Heart left ventricle (tissue), 16 donors: ENCODE measurements at regions of chr7 and their contacts with region 1.

Region 1: DNA sequence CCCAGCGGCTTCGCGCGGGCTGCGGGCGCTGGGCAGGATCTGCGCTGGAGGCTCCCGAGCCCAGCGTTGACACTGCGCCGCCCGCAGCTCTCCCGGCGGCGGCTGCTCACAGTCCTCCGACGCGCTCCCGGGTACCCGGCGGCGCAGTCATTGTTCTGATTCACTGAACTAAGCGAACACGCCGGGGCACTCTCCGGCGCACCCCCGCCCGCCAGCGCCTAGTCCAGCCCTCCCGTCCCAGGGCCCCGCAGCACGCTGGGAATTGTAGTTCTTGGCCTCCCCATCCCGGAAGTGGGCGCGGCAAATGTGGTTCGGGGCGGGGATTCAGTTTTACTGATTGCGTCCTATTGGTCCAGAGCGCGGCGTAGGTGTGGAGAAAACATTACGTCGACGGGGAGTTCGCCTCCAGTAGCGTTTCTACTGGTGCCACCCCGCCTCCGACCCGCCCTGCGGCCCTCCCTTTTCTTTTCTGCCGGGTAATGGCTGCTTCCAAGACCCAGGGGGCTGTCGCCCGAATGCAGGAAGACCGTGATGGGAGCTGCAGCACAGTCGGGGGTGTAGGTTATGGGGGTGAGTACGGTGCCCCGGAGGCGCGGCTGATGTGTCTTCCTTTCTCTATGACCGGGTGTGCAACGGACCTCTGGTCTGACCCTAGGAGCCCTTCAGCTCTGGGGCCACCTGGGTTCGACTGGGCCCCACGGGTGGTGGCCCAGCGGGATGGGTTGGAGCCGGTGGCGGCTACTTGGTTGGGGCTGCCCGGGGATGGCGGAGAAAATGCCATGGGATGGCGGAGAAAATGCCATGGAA is at the starts of genes DOCK4 and ZNF277:
- DNase-seq: peak; percentile 99
- ATAC-seq: peak; percentile 96 to 98 (median 96)
- H3K4me3 ChIP-seq: peak within 1 kb of the TSS; percentile 59 to 98 (median 88)
- H3K27ac ChIP-seq: peak within 1 kb of the TSS; percentile 72 to 95 (median 90)
- H3K4me1 ChIP-seq: peaks cover 0 to 43% (median 17%) of the 10 kb centered on the region in 12 donors
- H3K27me3 ChIP-seq: no peaks in the 10 kb centered on the region
- CTCF ChIP-seq: peak in 1 of 12 donors; percentile 16
- POLR2A ChIP-seq: peak; percentile 60 to 98
- total RNA-seq, gene DOCK4: 9.7 to 40.8 (median 17.0) TPM
- total RNA-seq, gene ZNF277: 10.3 to 26.5 (median 16.6) TPM

Region 2: GRCh38 chr7:111752022-111752582 is 454.3 kb before region 1 on chr7:
- intact Hi-C with region 1: loop called in 1 of 10 experiments (anchors 5 kb)
- DNase-seq: peak; percentile 37 to 71 (median 44)
- ATAC-seq: peak in 3 of 4 donors; percentile 50 to 56 (median 56)
- H3K4me3 ChIP-seq: no peak overlapping the region
- H3K27ac ChIP-seq: no peak overlapping the region
- H3K4me1 ChIP-seq: peaks cover 0 to under 1% (median 0%) of the 10 kb centered on the region in 12 donors
- H3K27me3 ChIP-seq: no peaks in the 10 kb centered on the region
- CTCF ChIP-seq: peak; percentile 63 to 81 (median 75)
- POLR2A ChIP-seq: no peak

Region 3: DNA sequence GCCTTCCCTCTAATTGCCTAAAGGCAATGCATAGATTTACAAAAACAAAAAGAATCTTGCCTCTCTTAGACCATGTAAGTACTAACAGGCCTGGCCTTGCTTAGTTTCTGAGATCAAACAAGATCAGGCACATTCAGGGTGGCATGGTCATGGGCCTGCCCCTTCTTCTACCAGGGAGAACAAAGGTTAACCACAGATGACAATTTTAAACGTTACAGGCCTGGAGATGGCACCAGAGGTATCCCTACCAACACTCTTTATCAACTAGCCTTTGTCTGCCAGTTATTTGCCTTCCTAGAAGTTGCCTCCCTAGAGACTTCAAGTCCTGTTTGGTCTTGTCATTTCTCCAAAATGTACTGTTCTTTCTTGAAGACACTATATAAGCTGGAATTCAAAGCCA is 252.8 kb before region 1 on chr7:
- intact Hi-C with region 1: loop called in 6 of 10 experiments (anchors 5 to 10 kb)
- DNase-seq: peak in 1 of 5 donors; percentile 15
- ATAC-seq: peak; percentile 75 to 82 (median 79)
- H3K4me3 ChIP-seq: no peak overlapping the region
- H3K27ac ChIP-seq: peak overlapping the region in 3 of 12 donors; percentile 5 to 77 (median 63)
- H3K4me1 ChIP-seq: peaks cover 0 to 42% (median 22%) of the 10 kb centered on the region in 12 donors
- H3K27me3 ChIP-seq: no peaks in the 10 kb centered on the region
- CTCF ChIP-seq: peak in 9 of 12 donors; percentile 23 to 41 (median 30)
- POLR2A ChIP-seq: no peak

Region 4: DNA sequence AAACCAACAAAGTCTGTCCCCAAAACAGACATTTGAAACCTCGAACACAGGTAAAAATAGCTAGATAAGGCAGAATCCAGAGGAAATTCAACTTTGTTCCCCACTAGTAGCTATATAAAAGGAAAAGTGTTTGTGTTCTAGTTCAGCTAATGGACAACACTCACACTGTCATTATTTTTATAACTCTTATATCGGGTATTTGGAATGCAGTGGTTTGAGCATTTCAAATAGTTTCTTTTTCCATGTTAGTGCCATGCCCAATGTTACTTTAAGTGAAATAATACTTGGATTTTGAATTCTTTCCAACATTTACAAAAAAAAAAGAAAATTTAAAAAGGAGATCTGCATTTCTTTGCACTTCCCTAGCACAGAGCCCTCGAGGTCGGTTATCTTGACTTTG is 213.8 kb before region 1 on chr7:
- intact Hi-C with region 1: loop called in 1 of 10 experiments (anchors 10 kb)
- DNase-seq: no peak
- ATAC-seq: no peak
- H3K4me3 ChIP-seq: no peak overlapping the region
- H3K27ac ChIP-seq: peak overlapping the region in 1 of 12 donors; percentile 9
- H3K4me1 ChIP-seq: peaks cover 0 to 10% (median 3%) of the 10 kb centered on the region in 12 donors
- H3K27me3 ChIP-seq: no peaks in the 10 kb centered on the region
- CTCF ChIP-seq: no peak
- POLR2A ChIP-seq: no peak

Region 5: DNA sequence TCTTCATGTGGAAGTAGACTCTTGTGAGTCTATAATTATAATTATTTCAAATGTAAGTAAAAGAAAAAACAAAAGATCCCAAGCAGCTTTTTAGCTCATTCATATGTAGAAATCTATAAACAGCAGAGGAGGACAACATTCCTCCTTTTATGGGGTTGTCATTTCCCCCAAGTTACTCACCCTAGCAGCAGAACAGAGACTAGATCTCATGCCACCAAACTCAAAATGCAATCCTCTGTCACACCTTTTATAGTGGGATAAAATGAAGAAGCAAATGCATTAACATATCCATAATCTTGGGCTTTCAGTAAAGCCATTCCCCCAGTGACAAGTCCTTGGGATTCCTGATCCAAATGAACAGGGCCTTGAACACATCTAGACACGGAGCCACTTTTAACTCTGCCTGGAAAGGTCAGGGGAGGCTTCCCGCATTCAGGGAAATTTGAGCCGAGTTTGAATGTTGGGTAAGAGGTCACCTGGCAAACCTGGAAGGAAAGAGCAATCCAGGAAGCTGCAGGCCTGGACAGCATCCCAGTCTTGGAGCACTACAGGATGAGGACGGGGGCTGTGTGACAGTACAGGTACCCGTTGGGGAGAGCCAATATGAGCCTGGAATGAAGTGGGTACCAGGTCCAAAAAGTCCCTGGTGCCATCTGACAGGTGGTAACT is 76.7 kb before region 1 on chr7:
- intact Hi-C with region 1: loop called in 4 of 10 experiments (anchors 5 to 10 kb)
- DNase-seq: peak in 3 of 5 donors; percentile 39 to 53 (median 51)
- ATAC-seq: peak; percentile 33 to 73 (median 56)
- H3K4me3 ChIP-seq: no peak overlapping the region
- H3K27ac ChIP-seq: peak overlapping the region in 11 of 12 donors; percentile 16 to 74 (median 45)
- H3K4me1 ChIP-seq: peaks cover 9 to 58% (median 45%) of the 10 kb centered on the region in 12 donors
- H3K27me3 ChIP-seq: no peaks in the 10 kb centered on the region
- CTCF ChIP-seq: no peak
- POLR2A ChIP-seq: no peak

Region 6: DNA sequence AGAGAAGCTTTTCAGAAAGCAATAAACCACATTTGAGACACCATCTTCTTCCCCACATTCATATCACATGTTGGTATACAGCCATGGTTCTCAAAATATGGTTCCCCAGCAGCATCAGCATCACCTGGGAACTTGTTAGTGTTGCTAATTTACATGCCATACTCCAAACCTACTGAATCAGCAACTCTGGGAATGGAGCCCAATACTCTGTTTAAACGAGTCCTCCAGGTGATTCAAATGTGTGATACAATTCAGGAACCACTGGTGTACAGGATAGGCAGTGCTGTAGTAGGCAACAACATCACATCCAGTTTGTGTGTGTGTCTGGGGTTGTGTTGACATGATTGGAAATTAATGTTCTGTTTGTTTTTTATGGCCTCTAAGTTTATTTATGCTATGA is 47.7 kb after region 1 on chr7:
- intact Hi-C with region 1: no loop called
- DNase-seq: no peak
- ATAC-seq: no peak
- H3K4me3 ChIP-seq: no peak overlapping the region
- H3K27ac ChIP-seq: no peak overlapping the region
- H3K4me1 ChIP-seq: peaks cover 0 to 8% (median 0%) of the 10 kb centered on the region in 12 donors
- H3K27me3 ChIP-seq: no peaks in the 10 kb centered on the region
- CTCF ChIP-seq: no peak
- POLR2A ChIP-seq: no peak

Region 7: GRCh38 chr7:112390167-112390566 is 183.7 kb after region 1 on chr7:
- intact Hi-C with region 1: loop called in 3 of 10 experiments (anchors 5 to 10 kb)
- DNase-seq: no peak
- ATAC-seq: no peak
- H3K4me3 ChIP-seq: no peak overlapping the region
- H3K27ac ChIP-seq: no peak overlapping the region
- H3K4me1 ChIP-seq: peaks cover 0 to 7% (median 2%) of the 10 kb centered on the region in 12 donors
- H3K27me3 ChIP-seq: no peaks in the 10 kb centered on the region
- CTCF ChIP-seq: no peak
- POLR2A ChIP-seq: no peak

Region 8: GRCh38 chr7:112449902-112450806 is 243.7 kb after region 1 on chr7 and contains the start of gene IFRD1:
- intact Hi-C with region 1: loop called in 1 of 10 experiments (anchors 5 kb)
- DNase-seq: peak; percentile 98 to 100 (median 100)
- ATAC-seq: peak; percentile 93 to 97 (median 94)
- H3K4me3 ChIP-seq: peak within 1 kb of the TSS; percentile 73 to 99 (median 86)
- H3K27ac ChIP-seq: peak within 1 kb of the TSS; percentile 90 to 100 (median 97)
- H3K4me1 ChIP-seq: peaks cover 4 to 42% (median 27%) of the 10 kb centered on the region in 12 donors
- H3K27me3 ChIP-seq: no peaks in the 10 kb centered on the region
- CTCF ChIP-seq: peak in 1 of 12 donors; percentile 7
- POLR2A ChIP-seq: peak; percentile 96 to 100
- total RNA-seq, gene IFRD1: 11.3 to 50.6 (median 26.3) TPM